CD4-positive, alpha-beta T cell (primary cell): ENCODE measurements at regions of chr1 and their contacts with region 1.

Region 1: DNA sequence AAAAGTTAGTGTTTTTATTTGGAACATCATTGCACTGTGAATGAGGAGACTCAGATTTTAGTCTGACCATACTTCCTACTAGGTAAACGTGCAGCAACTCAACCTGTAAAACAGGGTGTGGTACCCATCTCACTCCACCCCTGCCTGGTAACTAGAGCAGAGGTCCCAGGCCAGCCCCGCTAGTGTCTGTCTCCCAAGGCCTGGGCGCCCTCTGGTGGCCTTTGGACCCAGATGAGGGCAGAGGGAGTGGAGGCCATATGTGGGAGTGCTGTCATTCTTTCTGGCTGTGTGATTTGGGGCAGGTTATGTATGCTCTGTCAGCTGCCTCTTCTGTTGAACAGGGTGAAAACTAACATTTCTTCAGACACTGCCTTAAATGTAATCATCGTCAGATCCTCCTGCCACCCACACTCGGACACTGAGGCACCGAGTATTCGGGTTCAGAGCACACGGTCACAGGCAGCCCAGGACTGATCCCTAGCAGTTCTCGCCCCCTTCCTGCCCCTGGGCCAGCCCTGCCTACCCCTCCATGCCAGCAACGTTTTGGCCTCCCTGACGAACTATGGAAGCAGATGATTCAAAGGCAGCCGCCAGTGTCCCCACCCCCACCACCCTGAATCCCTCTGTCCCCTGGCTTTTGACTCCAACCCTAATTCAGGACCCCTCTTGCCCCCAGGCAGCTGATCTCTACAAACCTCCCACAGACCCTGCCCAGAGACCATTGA is 76.0 kb downstream of the CD247 start:
- DNase-seq: peak; percentile 79 to 92 (median 88)
- ATAC-seq: peak; percentile 84
- H3K4me3 ChIP-seq: no peak overlapping the region
- H3K4me3 Mint-ChIP-seq: peak overlapping the region; percentile 45
- H3K27ac ChIP-seq: peak overlapping the region in 1 of 2 donors; percentile 41
- H3K27ac Mint-ChIP-seq: peak overlapping the region; percentile 100
- H3K4me1 ChIP-seq: peaks cover 91% of the 10 kb centered on the region
- H3K4me1 Mint-ChIP-seq: peaks cover 89% of the 10 kb centered on the region
- H3K27me3 ChIP-seq: no peaks in the 10 kb centered on the region
- H3K27me3 Mint-ChIP-seq: no peaks in the 10 kb centered on the region
- CTCF ChIP-seq: peak; percentile 86

Region 2: DNA sequence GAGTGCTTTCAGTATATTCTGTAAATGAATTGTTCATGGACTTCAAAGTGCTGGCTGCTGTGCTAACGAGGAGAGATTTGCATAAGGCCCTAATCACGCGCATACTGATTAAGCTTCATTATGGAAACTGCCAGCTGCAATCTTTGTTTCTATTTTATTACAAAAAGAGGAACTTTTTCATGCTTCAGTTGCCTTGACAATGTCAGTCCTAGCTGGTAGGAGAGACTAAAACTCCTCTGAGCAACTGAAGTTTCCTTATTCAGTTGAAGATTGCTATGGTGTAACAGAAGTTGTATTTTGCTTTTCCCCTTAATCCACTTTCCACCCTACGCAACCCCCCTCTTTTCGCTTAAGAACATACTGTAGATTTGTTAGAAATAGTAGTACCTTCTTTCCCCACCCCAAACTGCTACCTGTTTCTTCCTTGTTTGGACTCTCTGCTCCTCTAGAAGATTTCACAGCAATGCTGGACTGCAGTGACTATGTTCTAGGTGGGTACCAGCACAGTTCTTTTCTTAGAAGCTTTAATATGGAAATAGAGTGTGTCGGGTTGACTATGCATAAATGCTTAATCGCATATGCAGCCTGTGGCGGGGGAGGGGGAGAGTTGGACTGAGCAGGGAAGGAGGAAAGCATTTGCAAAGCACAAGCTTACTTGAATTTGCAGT is 113.3 kb before region 1 on chr1:
- CTCF ChIA-PET with region 1: no interaction called
- POLR2A ChIA-PET with region 1: no interaction called
- intact Hi-C with region 1: no loop called
- DNase-seq: peak in 1 of 14 experiments; percentile 9
- ATAC-seq: no peak
- H3K4me3 ChIP-seq: no peak overlapping the region
- H3K4me3 Mint-ChIP-seq: no peak overlapping the region
- H3K27ac ChIP-seq: no peak overlapping the region
- H3K27ac Mint-ChIP-seq: no peak overlapping the region
- H3K4me1 ChIP-seq: no peaks in the 10 kb centered on the region
- H3K4me1 Mint-ChIP-seq: peaks cover 37% of the 10 kb centered on the region
- H3K27me3 ChIP-seq: no peaks in the 10 kb centered on the region
- H3K27me3 Mint-ChIP-seq: no peaks in the 10 kb centered on the region
- CTCF ChIP-seq: no peak

Region 3: GRCh38 chr1:167401260-167401873 is 40.9 kb before region 1 on chr1:
- CTCF ChIA-PET with region 1: interaction called, 3 read pairs
- POLR2A ChIA-PET with region 1: no interaction called
- intact Hi-C with region 1: loop called in 1 of 2 experiments (anchors 5 kb)
- DNase-seq: peak in 13 of 14 experiments; percentile 17 to 76 (median 37)
- ATAC-seq: peak; percentile 58
- H3K4me3 ChIP-seq: no peak overlapping the region
- H3K4me3 Mint-ChIP-seq: no peak overlapping the region
- H3K27ac ChIP-seq: no peak overlapping the region
- H3K27ac Mint-ChIP-seq: no peak overlapping the region
- H3K4me1 ChIP-seq: no peaks in the 10 kb centered on the region
- H3K4me1 Mint-ChIP-seq: no peaks in the 10 kb centered on the region
- H3K27me3 ChIP-seq: no peaks in the 10 kb centered on the region
- H3K27me3 Mint-ChIP-seq: no peaks in the 10 kb centered on the region
- CTCF ChIP-seq: peak; percentile 77

Region 4: DNA sequence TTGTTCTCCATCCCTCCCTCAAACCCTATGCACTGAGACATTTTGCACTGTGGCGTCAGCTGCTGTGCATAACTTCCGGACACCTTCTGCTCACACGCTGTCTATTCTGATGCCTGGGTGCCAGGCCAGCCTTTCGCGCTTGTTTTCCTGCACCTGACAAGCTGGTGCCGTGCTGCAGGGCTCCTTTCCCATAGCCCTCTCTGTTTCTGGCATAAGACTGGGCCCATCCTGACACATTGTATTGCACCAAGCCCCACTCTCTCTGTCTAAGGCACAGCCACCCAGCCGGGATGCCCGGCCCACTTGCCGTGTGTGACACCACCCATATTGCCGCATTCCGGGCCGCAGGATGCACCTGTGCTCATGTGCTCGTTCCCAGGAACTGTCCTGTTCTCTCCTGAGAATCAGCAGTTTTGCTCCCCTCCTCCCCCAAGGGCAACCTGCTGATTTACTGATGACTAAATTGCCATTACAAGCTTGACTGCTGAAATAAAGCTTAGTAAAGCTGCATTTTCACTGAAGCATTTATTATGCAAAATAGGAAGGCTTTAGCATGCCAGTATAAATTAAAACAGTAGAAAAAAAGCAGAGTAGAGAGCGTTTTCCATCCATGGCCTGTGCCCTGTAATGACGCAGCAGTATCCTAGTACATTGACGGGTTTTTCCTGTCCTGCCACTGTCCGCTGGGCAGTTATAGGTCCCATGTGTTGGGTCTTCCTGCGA is 12.0 kb before region 1 on chr1:
- CTCF ChIA-PET with region 1: interaction called, 3 read pairs
- POLR2A ChIA-PET with region 1: interaction called, 21 read pairs
- intact Hi-C with region 1: no loop called
- DNase-seq: peak in 1 of 14 experiments; percentile 48
- ATAC-seq: peak; percentile 48
- H3K4me3 ChIP-seq: no peak overlapping the region
- H3K4me3 Mint-ChIP-seq: peak overlapping the region; percentile 72
- H3K27ac ChIP-seq: peak overlapping the region in 1 of 2 donors; percentile 21
- H3K27ac Mint-ChIP-seq: peak overlapping the region; percentile 80
- H3K4me1 ChIP-seq: peaks cover 61% of the 10 kb centered on the region
- H3K4me1 Mint-ChIP-seq: peaks cover 67% of the 10 kb centered on the region
- H3K27me3 ChIP-seq: no peaks in the 10 kb centered on the region
- H3K27me3 Mint-ChIP-seq: no peaks in the 10 kb centered on the region
- CTCF ChIP-seq: no peak

Region 5: GRCh38 chr1:167533851-167534300 is 91.6 kb after region 1 on chr1:
- CTCF ChIA-PET with region 1: interaction called, 14 read pairs
- POLR2A ChIA-PET with region 1: interaction called, 3 read pairs
- intact Hi-C with region 1: loop called in 1 of 2 experiments (anchors 5 kb)
- DNase-seq: peak in 13 of 14 experiments; percentile 44 to 82 (median 57)
- ATAC-seq: peak; percentile 90
- H3K4me3 ChIP-seq: no peak overlapping the region
- H3K4me3 Mint-ChIP-seq: no peak overlapping the region
- H3K27ac ChIP-seq: no peak overlapping the region
- H3K27ac Mint-ChIP-seq: no peak overlapping the region
- H3K4me1 ChIP-seq: peaks cover 7% of the 10 kb centered on the region
- H3K4me1 Mint-ChIP-seq: no peaks in the 10 kb centered on the region
- H3K27me3 ChIP-seq: no peaks in the 10 kb centered on the region
- H3K27me3 Mint-ChIP-seq: no peaks in the 10 kb centered on the region
- CTCF ChIP-seq: peak; percentile 97

Region 6: DNA sequence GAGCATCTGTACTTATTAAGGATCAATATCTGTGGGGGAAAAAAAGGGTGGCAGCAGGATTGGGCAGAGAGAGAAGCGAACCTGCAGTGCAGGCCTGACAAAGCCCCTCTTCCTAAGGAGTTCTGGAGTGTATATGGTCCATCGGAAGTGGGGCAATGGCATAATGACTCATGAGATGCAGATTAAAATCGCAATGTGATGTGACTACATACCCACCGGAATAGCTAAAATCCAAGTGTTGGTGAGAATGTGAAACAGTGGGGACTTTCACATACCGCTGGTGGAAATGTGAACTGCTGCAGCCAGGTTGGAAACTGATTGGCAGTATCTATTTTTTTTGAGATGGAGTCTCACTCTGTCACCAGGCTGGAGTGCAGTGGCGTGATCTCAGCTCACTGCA is 119.5 kb after region 1 on chr1:
- CTCF ChIA-PET with region 1: no interaction called
- POLR2A ChIA-PET with region 1: no interaction called
- intact Hi-C with region 1: no loop called
- DNase-seq: no peak
- ATAC-seq: no peak
- H3K4me3 ChIP-seq: no peak overlapping the region
- H3K4me3 Mint-ChIP-seq: no peak overlapping the region
- H3K27ac ChIP-seq: no peak overlapping the region
- H3K27ac Mint-ChIP-seq: no peak overlapping the region
- H3K4me1 ChIP-seq: no peaks in the 10 kb centered on the region
- H3K4me1 Mint-ChIP-seq: no peaks in the 10 kb centered on the region
- H3K27me3 ChIP-seq: no peaks in the 10 kb centered on the region
- H3K27me3 Mint-ChIP-seq: no peaks in the 10 kb centered on the region
- CTCF ChIP-seq: no peak

Region 7: DNA sequence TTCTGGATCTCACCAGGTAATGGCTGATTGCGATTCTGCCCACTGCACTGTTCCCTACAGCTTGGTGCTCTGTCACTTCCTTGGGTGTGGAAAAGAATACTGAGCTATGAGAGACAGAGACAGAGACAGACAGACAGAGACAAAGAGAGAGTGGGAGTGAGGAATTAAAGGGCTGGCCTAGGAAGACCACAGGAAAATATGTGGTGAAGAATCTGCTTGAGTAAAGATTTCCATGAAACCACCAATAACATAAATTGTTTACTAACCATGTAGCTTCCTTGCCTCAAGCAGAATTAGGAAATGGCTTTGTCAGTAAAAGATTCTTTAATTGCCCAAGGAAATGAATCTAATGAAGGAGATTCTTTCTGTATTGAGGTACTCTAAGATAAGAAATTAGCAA is 333.9 kb after region 1 on chr1:
- CTCF ChIA-PET with region 1: no interaction called
- POLR2A ChIA-PET with region 1: no interaction called
- intact Hi-C with region 1: no loop called
- DNase-seq: no peak
- ATAC-seq: no peak
- H3K4me3 ChIP-seq: no peak overlapping the region
- H3K4me3 Mint-ChIP-seq: no peak overlapping the region
- H3K27ac ChIP-seq: no peak overlapping the region
- H3K27ac Mint-ChIP-seq: no peak overlapping the region
- H3K4me1 ChIP-seq: no peaks in the 10 kb centered on the region
- H3K4me1 Mint-ChIP-seq: peaks cover 13% of the 10 kb centered on the region
- H3K27me3 ChIP-seq: no peaks in the 10 kb centered on the region
- H3K27me3 Mint-ChIP-seq: no peaks in the 10 kb centered on the region
- CTCF ChIP-seq: no peak